ENCODE measurements at regions of chr2 and their contacts with region 1.

Region 1: GRCh38 chr2:132448771-132449170 is 32.2 kb downstream of the GPR39 start:
- DNase-seq: no peak
- H3K4me3 ChIP-seq: no peak overlapping the region
- H3K27ac ChIP-seq: no peak overlapping the region
- H3K4me1 ChIP-seq: peaks cover 0 to 3% (median 1%) of the 10 kb centered on the region in 4 donors
- H3K27me3 ChIP-seq: peaks cover 0 to 10% (median 0%) of the 10 kb centered on the region in 4 donors
- CTCF ChIP-seq: peak; percentile 34 to 50 (median 34)
- EP300 ChIP-seq: no peak
- POLR2A ChIP-seq: no peak

Region 2: GRCh38 chr2:132009874-132010521 is 438.8 kb before region 1 on chr2:
- intact Hi-C with region 1: no loop called
- DNase-seq: no peak
- H3K4me3 ChIP-seq: peak overlapping the region; percentile 41 to 47 (median 44)
- H3K27ac ChIP-seq: no peak overlapping the region
- H3K4me1 ChIP-seq: peaks cover 0 to 11% (median 8%) of the 10 kb centered on the region in 4 donors
- H3K27me3 ChIP-seq: peaks cover 0 to 26% (median 13%) of the 10 kb centered on the region in 4 donors
- CTCF ChIP-seq: no peak
- EP300 ChIP-seq: no peak
- POLR2A ChIP-seq: no peak

Region 3: DNA sequence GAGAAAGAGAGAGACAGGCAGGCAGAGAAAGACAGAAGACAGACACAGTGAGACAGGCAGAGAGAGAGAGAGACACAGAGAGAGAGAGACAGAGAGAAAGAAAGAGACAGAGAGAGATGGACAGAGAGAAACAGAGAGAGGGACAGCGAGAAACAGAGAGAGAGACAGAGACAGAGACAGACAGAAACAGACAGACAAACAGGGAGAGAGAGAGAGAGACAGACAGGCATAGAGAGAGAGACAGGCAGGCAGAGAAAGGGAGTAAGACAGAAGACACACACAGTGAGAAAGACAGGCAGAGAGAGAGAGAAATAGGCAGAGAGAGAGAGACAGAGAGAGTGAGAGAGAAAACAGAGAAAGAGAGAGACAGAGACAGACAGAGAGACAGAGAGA is 181.7 kb before region 1 on chr2:
- intact Hi-C with region 1: loop called (anchors 5 kb)
- DNase-seq: no peak
- H3K4me3 ChIP-seq: no peak overlapping the region
- H3K27ac ChIP-seq: no peak overlapping the region
- H3K4me1 ChIP-seq: peaks cover 8 to 15% (median 11%) of the 10 kb centered on the region in 4 donors
- H3K27me3 ChIP-seq: peaks cover 0 to 49% (median 3%) of the 10 kb centered on the region in 4 donors
- CTCF ChIP-seq: no peak
- EP300 ChIP-seq: no peak
- POLR2A ChIP-seq: no peak

Region 4: DNA sequence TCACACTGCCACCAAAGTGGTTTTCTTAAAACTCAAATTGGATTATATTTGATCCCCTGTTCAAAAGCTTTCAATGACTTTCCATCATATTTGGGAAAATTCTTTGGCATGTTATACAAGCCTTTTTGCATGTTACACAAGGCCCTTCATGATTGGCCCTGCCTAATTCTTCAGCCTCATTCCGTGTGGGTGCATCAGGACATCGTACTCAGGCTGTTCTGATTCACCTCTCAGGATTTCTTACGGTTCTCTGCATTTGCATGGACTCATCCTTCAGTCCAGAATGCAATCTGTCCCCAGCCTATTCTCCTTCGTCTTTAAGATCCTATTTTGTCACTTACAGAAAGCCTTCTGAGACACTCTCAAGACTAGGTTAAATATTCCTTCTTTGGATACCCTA is 113.5 kb after region 1 on chr2:
- intact Hi-C with region 1: no loop called
- DNase-seq: no peak
- H3K4me3 ChIP-seq: no peak overlapping the region
- H3K27ac ChIP-seq: no peak overlapping the region
- H3K4me1 ChIP-seq: peaks cover 0 to 5% (median 0%) of the 10 kb centered on the region in 4 donors
- H3K27me3 ChIP-seq: no peaks in the 10 kb centered on the region
- CTCF ChIP-seq: no peak
- EP300 ChIP-seq: no peak
- POLR2A ChIP-seq: no peak

Region 5: GRCh38 chr2:132733094-132733493 is 284.3 kb after region 1 on chr2:
- intact Hi-C with region 1: no loop called
- DNase-seq: peak; percentile 50
- H3K4me3 ChIP-seq: no peak overlapping the region
- H3K27ac ChIP-seq: no peak overlapping the region
- H3K4me1 ChIP-seq: no peaks in the 10 kb centered on the region
- H3K27me3 ChIP-seq: no peaks in the 10 kb centered on the region
- CTCF ChIP-seq: no peak
- EP300 ChIP-seq: no peak
- POLR2A ChIP-seq: no peak